ENCODE measurements at regions of chr11 and their contacts with region 1.

Region 1: DNA sequence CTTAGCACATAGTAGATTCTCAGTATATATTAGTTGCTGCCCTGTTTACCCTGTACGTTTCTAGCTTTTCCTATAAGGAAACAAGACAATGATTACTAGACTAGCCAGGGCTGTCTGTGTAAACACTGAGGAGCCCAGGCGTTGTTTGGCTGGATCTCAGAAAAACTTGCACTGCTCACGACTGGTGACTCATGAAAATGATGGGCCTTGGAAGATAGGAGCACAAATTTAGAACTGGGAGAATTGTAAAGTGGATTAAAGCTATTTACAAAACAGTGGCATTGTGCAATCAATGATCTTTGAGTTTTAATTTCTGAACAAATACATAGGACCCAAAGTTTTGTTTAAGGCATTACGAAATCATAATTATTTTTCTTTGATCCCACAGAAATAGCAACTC is 276.9 kb downstream of the FAM76B start:
- DNase-seq: no peak
- ATAC-seq: no peak
- H3K4me3 ChIP-seq: no peak overlapping the region
- H3K4me3 Mint-ChIP-seq: no peak overlapping the region
- H3K27ac ChIP-seq: no peak overlapping the region
- H3K27ac Mint-ChIP-seq: no peak overlapping the region
- H3K4me1 ChIP-seq: no peaks in the 10 kb centered on the region
- H3K4me1 Mint-ChIP-seq: no peaks in the 10 kb centered on the region
- H3K27me3 ChIP-seq: no peaks in the 10 kb centered on the region
- H3K27me3 Mint-ChIP-seq: peaks cover 4 to 42% of the 10 kb centered on the region in 2 donors
- CTCF ChIP-seq: no peak

Region 2: GRCh38 chr11:95705485-95706124 is 192.9 kb after region 1 on chr11:
- intact Hi-C with region 1: loop called (anchors 10 kb)
- DNase-seq: peak; percentile 57 to 93
- ATAC-seq: peak; percentile 89 to 94 (median 92)
- H3K4me3 ChIP-seq: no peak overlapping the region
- H3K4me3 Mint-ChIP-seq: no peak overlapping the region
- H3K27ac ChIP-seq: no peak overlapping the region
- H3K27ac Mint-ChIP-seq: no peak overlapping the region
- H3K4me1 ChIP-seq: peaks cover 3% of the 10 kb centered on the region
- H3K4me1 Mint-ChIP-seq: peaks cover 0 to 6% of the 10 kb centered on the region in 2 donors
- H3K27me3 ChIP-seq: no peaks in the 10 kb centered on the region
- H3K27me3 Mint-ChIP-seq: peaks cover 6 to 7% of the 10 kb centered on the region in 2 donors
- CTCF ChIP-seq: peak; percentile 83